CD8-positive, alpha-beta T cell (primary cell): ENCODE measurements at regions of chr19 and their contacts with region 1.

Region 1: GRCh38 chr19:44164673-44165512 is at the start of gene ZNF226:
- DNase-seq: peak; percentile 61 to 95 (median 82)
- ATAC-seq: peak; percentile 92
- H3K4me3 ChIP-seq: peak within 1 kb of the TSS; percentile 72 to 79
- H3K4me3 Mint-ChIP-seq: peak within 1 kb of the TSS; percentile 98
- H3K27ac ChIP-seq: peak within 1 kb of the TSS; percentile 69 to 90
- H3K27ac Mint-ChIP-seq: peak within 1 kb of the TSS; percentile 99
- H3K4me1 ChIP-seq: peaks cover 10% of the 10 kb centered on the region
- H3K4me1 Mint-ChIP-seq: peaks cover 31% of the 10 kb centered on the region
- H3K27me3 ChIP-seq: no peaks in the 10 kb centered on the region
- H3K27me3 Mint-ChIP-seq: no peaks in the 10 kb centered on the region
- CTCF ChIP-seq: no peak
- total RNA-seq, gene ZNF226: 9.1 to 10.8 TPM

Region 2: GRCh38 chr19:43765109-43765876 is 399.6 kb before region 1 on chr19:
- CTCF ChIA-PET with region 1: no interaction called
- POLR2A ChIA-PET with region 1: no interaction called
- intact Hi-C with region 1: no loop called
- DNase-seq: peak in 8 of 9 experiments; percentile 51 to 85 (median 72)
- ATAC-seq: peak; percentile 84
- H3K4me3 ChIP-seq: no peak overlapping the region
- H3K4me3 Mint-ChIP-seq: peak overlapping the region; percentile 58
- H3K27ac ChIP-seq: peak overlapping the region; percentile 24 to 77
- H3K27ac Mint-ChIP-seq: peak overlapping the region; percentile 90
- H3K4me1 ChIP-seq: peaks cover 30% of the 10 kb centered on the region
- H3K4me1 Mint-ChIP-seq: peaks cover 31% of the 10 kb centered on the region
- H3K27me3 ChIP-seq: no peaks in the 10 kb centered on the region
- H3K27me3 Mint-ChIP-seq: no peaks in the 10 kb centered on the region
- CTCF ChIP-seq: no peak

Region 3: GRCh38 chr19:44071824-44072542 is 92.9 kb before region 1 on chr19 and contains the start of gene ZNF284:
- CTCF ChIA-PET with region 1: no interaction called
- POLR2A ChIA-PET with region 1: no interaction called
- intact Hi-C with region 1: loop called (anchors 1 to 5 kb)
- DNase-seq: peak; percentile 60 to 93 (median 83)
- ATAC-seq: peak; percentile 99
- H3K4me3 ChIP-seq: peak within 1 kb of the TSS; percentile 65 to 73
- H3K4me3 Mint-ChIP-seq: peak within 1 kb of the TSS; percentile 91
- H3K27ac ChIP-seq: peak within 1 kb of the TSS; percentile 2 to 59
- H3K27ac Mint-ChIP-seq: peak within 1 kb of the TSS; percentile 79
- H3K4me1 ChIP-seq: peaks cover 16% of the 10 kb centered on the region
- H3K4me1 Mint-ChIP-seq: peaks cover 36% of the 10 kb centered on the region
- H3K27me3 ChIP-seq: no peaks in the 10 kb centered on the region
- H3K27me3 Mint-ChIP-seq: no peaks in the 10 kb centered on the region
- CTCF ChIP-seq: no peak
- total RNA-seq, gene ZNF284: 0.64 to 1.2 TPM

Region 4: GRCh38 chr19:44141191-44142058 is 23.5 kb before region 1 on chr19 and contains the start of gene ZNF234:
- CTCF ChIA-PET with region 1: no interaction called
- POLR2A ChIA-PET with region 1: interaction called, 10 read pairs
- intact Hi-C with region 1: loop called (anchors 1 kb)
- DNase-seq: peak; percentile 22 to 86 (median 68)
- ATAC-seq: peak; percentile 93
- H3K4me3 ChIP-seq: peak within 1 kb of the TSS; percentile 77 to 82
- H3K4me3 Mint-ChIP-seq: peak within 1 kb of the TSS; percentile 96
- H3K27ac ChIP-seq: peak within 1 kb of the TSS; percentile 34 to 76
- H3K27ac Mint-ChIP-seq: peak within 1 kb of the TSS; percentile 85
- H3K4me1 ChIP-seq: peaks cover 17% of the 10 kb centered on the region
- H3K4me1 Mint-ChIP-seq: peaks cover 25% of the 10 kb centered on the region
- H3K27me3 ChIP-seq: no peaks in the 10 kb centered on the region
- H3K27me3 Mint-ChIP-seq: no peaks in the 10 kb centered on the region
- CTCF ChIP-seq: no peak
- total RNA-seq, gene ZNF234: 2.2 to 2.4 TPM

Region 5: GRCh38 chr19:44260363-44261070 is 95.6 kb after region 1 on chr19:
- CTCF ChIA-PET with region 1: no interaction called
- POLR2A ChIA-PET with region 1: no interaction called
- intact Hi-C with region 1: no loop called
- DNase-seq: no peak
- ATAC-seq: no peak
- H3K4me3 ChIP-seq: no peak overlapping the region
- H3K4me3 Mint-ChIP-seq: peak overlapping the region; percentile 79
- H3K27ac ChIP-seq: no peak overlapping the region
- H3K27ac Mint-ChIP-seq: peak overlapping the region; percentile 45
- H3K4me1 ChIP-seq: no peaks in the 10 kb centered on the region
- H3K4me1 Mint-ChIP-seq: peaks cover 10% of the 10 kb centered on the region
- H3K27me3 ChIP-seq: no peaks in the 10 kb centered on the region
- H3K27me3 Mint-ChIP-seq: no peaks in the 10 kb centered on the region
- CTCF ChIP-seq: no peak

Region 6: GRCh38 chr19:44304659-44305193 is 139.8 kb after region 1 on chr19 and contains the start of gene ZNF235:
- CTCF ChIA-PET with region 1: no interaction called
- POLR2A ChIA-PET with region 1: no interaction called
- intact Hi-C with region 1: loop called (anchors 1 to 2 kb)
- DNase-seq: peak; percentile 22 to 89 (median 70)
- ATAC-seq: peak; percentile 96
- H3K4me3 ChIP-seq: peak within 1 kb of the TSS; percentile 75 to 77
- H3K4me3 Mint-ChIP-seq: peak within 1 kb of the TSS; percentile 94
- H3K27ac ChIP-seq: peak within 1 kb of the TSS; percentile 26 to 52
- H3K27ac Mint-ChIP-seq: peak within 1 kb of the TSS; percentile 85
- H3K4me1 ChIP-seq: peaks cover 15% of the 10 kb centered on the region
- H3K4me1 Mint-ChIP-seq: peaks cover 35% of the 10 kb centered on the region
- H3K27me3 ChIP-seq: no peaks in the 10 kb centered on the region
- H3K27me3 Mint-ChIP-seq: peaks cover 7% of the 10 kb centered on the region
- CTCF ChIP-seq: no peak
- total RNA-seq, gene ZNF235: 2.6 to 3.7 TPM